MCF 10A (cell line): ENCODE measurements at regions of chr4 and their contacts with region 1.

Region 1: GRCh38 chr4:168831919-168832762 is 177.9 kb downstream of the CBR4 start:
- DNase-seq: peak; percentile 85
- H3K4me3 Mint-ChIP-seq: peak overlapping the region; percentile 93
- H3K27ac Mint-ChIP-seq: peak overlapping the region; percentile 97
- H3K4me1 Mint-ChIP-seq: peaks cover 24% of the 10 kb centered on the region
- H3K27me3 Mint-ChIP-seq: no peaks in the 10 kb centered on the region
- CTCF ChIP-seq: no peak

Region 2: DNA sequence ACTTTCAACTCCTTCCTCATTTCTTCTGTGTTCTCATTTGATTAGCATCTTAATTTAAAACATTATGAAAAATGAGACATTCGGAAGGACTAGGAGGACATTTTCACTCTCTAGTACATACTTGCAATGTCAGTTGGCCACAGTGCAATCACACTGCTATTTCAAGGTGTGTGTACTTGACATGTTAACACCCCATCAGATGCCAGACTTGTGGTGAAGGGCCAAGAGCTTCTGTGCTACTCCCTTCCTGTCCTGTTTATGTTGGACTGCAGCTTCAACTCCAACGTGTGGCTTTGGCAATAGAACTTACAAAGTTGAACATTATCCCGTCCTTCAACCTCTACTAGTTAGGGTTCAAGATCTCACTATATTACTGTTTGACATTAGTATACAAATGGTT is 114.3 kb before region 1 on chr4:
- CTCF ChIA-PET with region 1: interaction called, 4 read pairs
- POLR2A ChIA-PET with region 1: interaction called, 47 read pairs
- intact Hi-C with region 1: no loop called
- DNase-seq: peak; percentile 65
- H3K4me3 Mint-ChIP-seq: peak overlapping the region; percentile 4
- H3K27ac Mint-ChIP-seq: peak overlapping the region; percentile 77
- H3K4me1 Mint-ChIP-seq: peaks cover 36% of the 10 kb centered on the region
- H3K27me3 Mint-ChIP-seq: no peaks in the 10 kb centered on the region
- CTCF ChIP-seq: no peak

Region 3: GRCh38 chr4:168803732-168804131 is 28.4 kb before region 1 on chr4:
- CTCF ChIA-PET with region 1: interaction called, 5 read pairs
- POLR2A ChIA-PET with region 1: interaction called, 22 read pairs
- intact Hi-C with region 1: no loop called
- DNase-seq: peak; percentile 83
- H3K4me3 Mint-ChIP-seq: no peak overlapping the region
- H3K27ac Mint-ChIP-seq: peak overlapping the region; percentile 63
- H3K4me1 Mint-ChIP-seq: peaks cover 16% of the 10 kb centered on the region
- H3K27me3 Mint-ChIP-seq: no peaks in the 10 kb centered on the region
- CTCF ChIP-seq: no peak

Region 4: DNA sequence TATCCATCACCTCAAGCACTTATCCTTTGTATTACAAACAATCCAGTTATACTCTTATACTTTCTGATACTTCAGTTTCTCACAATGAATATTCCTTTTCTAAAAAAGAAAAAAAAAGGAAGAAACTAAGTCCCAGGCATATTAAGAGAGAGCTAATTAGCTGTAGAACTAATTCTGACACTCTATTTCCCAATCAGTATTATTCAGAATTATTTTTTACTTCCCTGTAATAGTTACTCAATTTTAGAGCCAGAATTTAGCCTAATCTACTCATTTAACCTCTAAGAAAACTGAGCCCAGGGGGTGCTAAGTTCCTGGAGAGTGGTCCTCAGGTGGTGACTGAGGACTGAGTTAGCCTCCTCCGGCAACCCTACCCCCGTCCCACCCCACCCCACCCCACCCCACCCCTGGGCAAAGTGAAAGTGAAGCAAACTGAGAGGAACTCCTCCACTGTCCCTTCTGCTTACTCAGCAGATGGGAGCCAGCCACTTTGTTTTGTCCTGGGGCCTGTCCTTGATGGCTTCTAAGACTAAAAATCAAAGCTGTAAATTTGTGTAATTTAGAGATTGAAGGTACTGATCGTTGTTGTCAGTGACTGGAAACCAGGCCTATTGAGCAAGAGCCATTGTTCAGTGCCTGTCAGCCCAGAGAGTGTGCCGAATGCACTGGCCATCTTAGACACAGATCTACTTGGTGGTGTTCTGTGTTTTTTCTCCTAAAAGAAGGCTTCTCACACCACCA is 15.8 kb after region 1 on chr4:
- CTCF ChIA-PET with region 1: interaction called, 7 read pairs
- POLR2A ChIA-PET with region 1: interaction called, 97 read pairs
- intact Hi-C with region 1: no loop called
- DNase-seq: peak; percentile 57
- H3K4me3 Mint-ChIP-seq: peak overlapping the region; percentile 65
- H3K27ac Mint-ChIP-seq: peak overlapping the region; percentile 93
- H3K4me1 Mint-ChIP-seq: peaks cover 38% of the 10 kb centered on the region
- H3K27me3 Mint-ChIP-seq: no peaks in the 10 kb centered on the region
- CTCF ChIP-seq: no peak

Region 5: GRCh38 chr4:168930413-168931181 is 98.5 kb after region 1 on chr4:
- CTCF ChIA-PET with region 1: no interaction called
- POLR2A ChIA-PET with region 1: no interaction called
- intact Hi-C with region 1: no loop called
- DNase-seq: no peak
- H3K4me3 Mint-ChIP-seq: no peak overlapping the region
- H3K27ac Mint-ChIP-seq: no peak overlapping the region
- H3K4me1 Mint-ChIP-seq: no peaks in the 10 kb centered on the region
- H3K27me3 Mint-ChIP-seq: no peaks in the 10 kb centered on the region
- CTCF ChIP-seq: no peak